Activated naive CD4-positive, alpha-beta T cell treated with anti-CD3 and anti-CD28 coated beads, Interleukin-2, amount 10 ng/mL, durations not matched to agents 7 days and 5 days (primary cell): ENCODE measurements at regions of chr13 and their contacts with region 1.

Region 1: DNA sequence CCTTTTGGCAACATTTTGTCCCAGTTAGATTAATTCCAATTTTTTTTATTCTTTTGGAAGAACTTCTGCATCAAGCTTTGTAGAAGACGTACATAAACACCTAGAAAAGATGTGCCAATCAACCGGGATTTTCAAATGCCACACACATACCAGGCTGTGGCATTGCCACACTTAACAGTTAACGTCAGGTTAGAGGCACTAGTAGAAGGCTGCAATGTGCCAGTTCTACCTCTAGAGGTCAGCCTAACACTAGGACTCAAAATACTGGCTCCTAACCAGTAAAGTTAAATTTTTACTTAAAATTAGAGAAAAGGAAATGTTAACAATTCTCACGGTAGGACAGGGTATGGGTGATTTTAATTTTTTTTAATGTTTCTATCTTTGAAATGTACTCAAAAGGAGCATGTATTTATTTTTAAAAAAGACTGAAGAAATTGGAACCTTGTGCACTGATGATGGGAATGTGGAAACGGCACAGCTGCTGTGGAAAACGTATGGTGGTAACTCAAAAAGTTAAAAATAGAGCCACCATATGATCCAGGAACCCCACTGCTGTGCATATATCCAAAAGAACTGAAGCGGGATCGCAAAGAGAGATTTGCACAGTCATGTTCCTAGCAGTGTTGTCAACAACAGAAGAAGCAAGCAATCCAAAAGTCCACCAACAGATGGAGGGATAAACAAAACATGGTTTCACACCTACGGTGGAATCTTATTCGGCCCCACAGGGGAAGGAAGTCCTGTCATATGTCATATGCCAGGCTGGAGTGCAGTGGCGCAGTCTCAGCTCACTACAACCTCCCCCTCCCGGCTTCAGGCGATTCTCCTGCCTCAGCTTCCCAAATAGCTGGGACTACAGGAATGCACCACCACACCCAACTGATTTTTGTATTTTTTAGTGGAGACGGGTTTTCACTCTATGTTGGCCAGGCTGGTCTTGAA is 30.3 kb downstream of the CRYL1 start:
- DNase-seq: peak; percentile 76
- H3K4me3 Mint-ChIP-seq: no peak overlapping the region
- H3K27ac Mint-ChIP-seq: no peak overlapping the region
- H3K4me1 Mint-ChIP-seq: peaks cover 17% of the 10 kb centered on the region
- H3K27me3 Mint-ChIP-seq: no peaks in the 10 kb centered on the region

Region 2: DNA sequence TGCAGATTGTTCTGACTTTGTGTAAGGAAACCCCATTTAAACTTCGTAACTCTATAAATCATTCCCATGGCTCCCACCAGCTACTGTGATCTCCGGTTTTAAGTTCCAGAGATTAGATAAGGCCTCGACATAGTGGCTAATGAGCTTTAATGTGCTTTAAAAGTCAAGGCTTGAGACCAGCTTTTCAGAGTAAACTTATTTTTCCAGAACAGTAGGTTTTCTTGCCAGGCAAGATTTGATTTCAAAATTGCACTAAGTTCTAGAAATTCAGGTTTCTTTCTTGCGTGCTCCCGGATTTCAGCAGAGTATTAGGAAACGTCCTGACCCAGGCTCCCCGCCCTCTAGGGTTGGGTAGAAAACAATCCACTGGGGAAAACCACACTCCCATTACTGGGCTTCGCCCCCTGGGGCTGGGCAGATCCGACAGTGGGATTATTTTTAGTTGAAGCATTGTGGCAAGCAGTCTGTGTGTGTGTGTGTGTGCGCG is 13.0 kb before region 1 on chr13:
- CTCF ChIA-PET with region 1: no interaction called
- DNase-seq: no peak
- H3K4me3 Mint-ChIP-seq: no peak overlapping the region
- H3K27ac Mint-ChIP-seq: no peak overlapping the region
- H3K4me1 Mint-ChIP-seq: peaks cover 10% of the 10 kb centered on the region
- H3K27me3 Mint-ChIP-seq: no peaks in the 10 kb centered on the region

Region 3: GRCh38 chr13:20924758-20925394 is 429.5 kb after region 1 on chr13:
- CTCF ChIA-PET with region 1: interaction called, 27 read pairs
- DNase-seq: peak; percentile 85
- H3K4me3 Mint-ChIP-seq: no peak overlapping the region
- H3K27ac Mint-ChIP-seq: no peak overlapping the region
- H3K4me1 Mint-ChIP-seq: no peaks in the 10 kb centered on the region
- H3K27me3 Mint-ChIP-seq: peaks cover 4% of the 10 kb centered on the region